ENCODE measurements at regions of chr10 and their contacts with region 1.

Region 1: DNA sequence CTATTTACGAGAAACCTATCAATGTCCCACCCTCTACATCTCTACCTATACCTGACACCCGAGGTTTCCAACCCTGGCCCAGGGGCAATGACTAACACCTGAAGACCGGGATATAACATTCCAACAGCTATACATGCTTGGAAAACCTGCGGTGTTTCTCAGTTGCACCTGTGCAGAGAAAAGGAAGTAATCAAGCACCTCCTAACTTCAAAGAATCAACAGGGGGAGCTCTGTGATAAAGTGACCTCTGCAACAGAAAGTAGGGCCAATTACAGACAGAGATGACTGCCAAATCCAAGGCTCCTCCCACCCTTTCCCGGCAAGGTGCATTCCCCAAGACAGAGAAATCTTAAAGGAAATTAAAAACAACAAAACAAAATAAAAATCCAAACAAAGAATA is 41.3 kb downstream of the CCDC6 start:
- DNase-seq: peak; percentile 90
- ATAC-seq: peak; percentile 81
- H3K4me3 ChIP-seq: no peak overlapping the region
- H3K27ac ChIP-seq: no peak overlapping the region
- H3K4me1 ChIP-seq: peaks cover 19% of the 10 kb centered on the region
- H3K27me3 ChIP-seq: no peaks in the 10 kb centered on the region
- CTCF ChIP-seq: peak; percentile 93

Region 2: GRCh38 chr10:59844436-59844835 is 20.7 kb before region 1 on chr10:
- CTCF ChIA-PET with region 1: no interaction called
- POLR2A ChIA-PET with region 1: interaction called, 10 read pairs
- intact Hi-C with region 1: no loop called
- DNase-seq: no peak
- ATAC-seq: no peak
- H3K4me3 ChIP-seq: no peak overlapping the region
- H3K27ac ChIP-seq: no peak overlapping the region
- H3K4me1 ChIP-seq: no peaks in the 10 kb centered on the region
- H3K27me3 ChIP-seq: no peaks in the 10 kb centered on the region
- CTCF ChIP-seq: no peak

Region 3: DNA sequence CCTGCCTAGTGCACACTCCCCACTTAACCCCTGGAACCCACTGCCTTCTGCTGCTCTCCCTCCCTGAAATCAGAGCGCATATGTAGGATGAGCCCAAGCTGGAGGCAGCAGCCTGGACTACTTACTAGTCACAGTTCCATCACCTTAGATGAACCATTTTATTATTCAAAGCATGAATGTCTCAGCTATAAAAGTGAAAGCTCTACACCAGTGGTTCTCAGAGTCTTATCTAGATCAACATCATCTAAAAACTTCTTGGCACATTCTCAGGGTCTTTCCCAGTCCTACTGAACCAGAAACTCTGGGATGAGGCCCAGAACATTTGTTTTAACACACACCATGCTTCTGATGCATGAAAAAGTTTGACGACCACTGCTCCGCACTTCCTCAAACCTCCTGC is 624.9 kb after region 1 on chr10:
- CTCF ChIA-PET with region 1: no interaction called
- POLR2A ChIA-PET with region 1: no interaction called
- intact Hi-C with region 1: no loop called
- DNase-seq: no peak
- ATAC-seq: peak; percentile 42
- H3K4me3 ChIP-seq: no peak overlapping the region
- H3K27ac ChIP-seq: no peak overlapping the region
- H3K4me1 ChIP-seq: peaks cover 8% of the 10 kb centered on the region
- H3K27me3 ChIP-seq: no peaks in the 10 kb centered on the region
- CTCF ChIP-seq: no peak